ENCODE measurements at regions of chr12 and their contacts with region 1.

Region 1: GRCh38 chr12:8890313-8891085 is 23.8 kb upstream of the PHC1 start:
- DNase-seq: peak; percentile 30 to 77 (median 55)
- ATAC-seq: peak; percentile 90
- H3K4me3 ChIP-seq: peak overlapping the region; percentile 44 to 55
- H3K4me3 Mint-ChIP-seq: peak overlapping the region; percentile 88
- H3K27ac ChIP-seq: peak overlapping the region in 1 of 2 experiments; percentile 26
- H3K27ac Mint-ChIP-seq: peak overlapping the region; percentile 66
- H3K4me1 ChIP-seq: no peaks in the 10 kb centered on the region
- H3K4me1 Mint-ChIP-seq: peaks cover 4% of the 10 kb centered on the region
- H3K27me3 ChIP-seq: no peaks in the 10 kb centered on the region
- H3K27me3 Mint-ChIP-seq: peaks cover 2% of the 10 kb centered on the region
- CTCF ChIP-seq: peak; percentile 94

Region 2: GRCh38 chr12:8544295-8544694 is 346.2 kb before region 1 on chr12:
- CTCF ChIA-PET with region 1: interaction called, 31 read pairs
- POLR2A ChIA-PET with region 1: no interaction called
- intact Hi-C with region 1: loop called (anchors 1 to 2 kb)
- DNase-seq: peak; percentile 46 to 84 (median 75)
- ATAC-seq: peak; percentile 81
- H3K4me3 ChIP-seq: no peak overlapping the region
- H3K4me3 Mint-ChIP-seq: peak overlapping the region; percentile 13
- H3K27ac ChIP-seq: no peak overlapping the region
- H3K27ac Mint-ChIP-seq: no peak overlapping the region
- H3K4me1 ChIP-seq: no peaks in the 10 kb centered on the region
- H3K4me1 Mint-ChIP-seq: peaks cover 9% of the 10 kb centered on the region
- H3K27me3 ChIP-seq: no peaks in the 10 kb centered on the region
- H3K27me3 Mint-ChIP-seq: peaks cover 14% of the 10 kb centered on the region
- CTCF ChIP-seq: peak; percentile 95

Region 3: GRCh38 chr12:8681041-8681902 is 209.2 kb before region 1 on chr12:
- CTCF ChIA-PET with region 1: interaction called, 81 read pairs
- POLR2A ChIA-PET with region 1: no interaction called
- intact Hi-C with region 1: loop called (anchors 1 kb)
- DNase-seq: no peak
- ATAC-seq: no peak
- H3K4me3 ChIP-seq: no peak overlapping the region
- H3K4me3 Mint-ChIP-seq: no peak overlapping the region
- H3K27ac ChIP-seq: no peak overlapping the region
- H3K27ac Mint-ChIP-seq: no peak overlapping the region
- H3K4me1 ChIP-seq: no peaks in the 10 kb centered on the region
- H3K4me1 Mint-ChIP-seq: peaks cover 10% of the 10 kb centered on the region
- H3K27me3 ChIP-seq: no peaks in the 10 kb centered on the region
- H3K27me3 Mint-ChIP-seq: peaks cover 2% of the 10 kb centered on the region
- CTCF ChIP-seq: no peak

Region 4: DNA sequence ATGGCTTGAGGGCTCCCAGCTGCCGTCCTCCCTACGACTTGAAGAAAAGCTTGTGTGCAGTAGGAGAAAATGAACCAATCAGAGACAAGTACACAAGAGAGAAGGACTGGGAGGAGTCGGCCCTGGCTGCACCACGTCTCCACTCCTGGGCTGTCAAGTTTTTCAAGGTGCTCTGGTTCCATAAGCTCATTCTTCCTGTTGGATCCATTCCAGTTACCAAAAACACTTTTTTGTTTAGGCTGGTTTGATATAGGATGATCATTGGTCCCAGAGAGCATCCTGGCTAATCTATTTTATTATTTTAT is 70.9 kb before region 1 on chr12:
- CTCF ChIA-PET with region 1: no interaction called
- POLR2A ChIA-PET with region 1: no interaction called
- intact Hi-C with region 1: no loop called
- DNase-seq: no peak
- ATAC-seq: no peak
- H3K4me3 ChIP-seq: no peak overlapping the region
- H3K4me3 Mint-ChIP-seq: no peak overlapping the region
- H3K27ac ChIP-seq: no peak overlapping the region
- H3K27ac Mint-ChIP-seq: no peak overlapping the region
- H3K4me1 ChIP-seq: no peaks in the 10 kb centered on the region
- H3K4me1 Mint-ChIP-seq: no peaks in the 10 kb centered on the region
- H3K27me3 ChIP-seq: no peaks in the 10 kb centered on the region
- H3K27me3 Mint-ChIP-seq: no peaks in the 10 kb centered on the region
- CTCF ChIP-seq: no peak

Region 5: GRCh38 chr12:8852119-8852518 is 38.4 kb before region 1 on chr12:
- CTCF ChIA-PET with region 1: interaction called, 12 read pairs
- POLR2A ChIA-PET with region 1: no interaction called
- intact Hi-C with region 1: no loop called
- DNase-seq: no peak
- ATAC-seq: no peak
- H3K4me3 ChIP-seq: no peak overlapping the region
- H3K4me3 Mint-ChIP-seq: no peak overlapping the region
- H3K27ac ChIP-seq: no peak overlapping the region
- H3K27ac Mint-ChIP-seq: no peak overlapping the region
- H3K4me1 ChIP-seq: no peaks in the 10 kb centered on the region
- H3K4me1 Mint-ChIP-seq: no peaks in the 10 kb centered on the region
- H3K27me3 ChIP-seq: no peaks in the 10 kb centered on the region
- H3K27me3 Mint-ChIP-seq: peaks cover 2% of the 10 kb centered on the region
- CTCF ChIP-seq: no peak

Region 6: GRCh38 chr12:8876887-8877286 is 13.6 kb before region 1 on chr12:
- CTCF ChIA-PET with region 1: interaction called, 17 read pairs
- POLR2A ChIA-PET with region 1: no interaction called
- intact Hi-C with region 1: no loop called
- DNase-seq: no peak
- ATAC-seq: no peak
- H3K4me3 ChIP-seq: no peak overlapping the region
- H3K4me3 Mint-ChIP-seq: no peak overlapping the region
- H3K27ac ChIP-seq: no peak overlapping the region
- H3K27ac Mint-ChIP-seq: no peak overlapping the region
- H3K4me1 ChIP-seq: no peaks in the 10 kb centered on the region
- H3K4me1 Mint-ChIP-seq: no peaks in the 10 kb centered on the region
- H3K27me3 ChIP-seq: no peaks in the 10 kb centered on the region
- H3K27me3 Mint-ChIP-seq: peaks cover 2% of the 10 kb centered on the region
- CTCF ChIP-seq: no peak

Region 7: GRCh38 chr12:8914716-8915526 is 24.4 kb after region 1 on chr12:
- CTCF ChIA-PET with region 1: interaction called, 11 read pairs
- POLR2A ChIA-PET with region 1: interaction called, 3 read pairs
- intact Hi-C with region 1: loop called in 1 of 2 experiments (anchors 2 kb)
- DNase-seq: peak; percentile 26 to 81 (median 60)
- ATAC-seq: peak; percentile 81
- H3K4me3 ChIP-seq: peak overlapping the region; percentile 79 to 82
- H3K4me3 Mint-ChIP-seq: no peak overlapping the region
- H3K27ac ChIP-seq: peak overlapping the region; percentile 44 to 61
- H3K27ac Mint-ChIP-seq: no peak overlapping the region
- H3K4me1 ChIP-seq: peaks cover 23% of the 10 kb centered on the region
- H3K4me1 Mint-ChIP-seq: peaks cover 13% of the 10 kb centered on the region
- H3K27me3 ChIP-seq: no peaks in the 10 kb centered on the region
- H3K27me3 Mint-ChIP-seq: no peaks in the 10 kb centered on the region
- CTCF ChIP-seq: no peak

Region 8: GRCh38 chr12:9039397-9039977 is 149.0 kb after region 1 on chr12:
- CTCF ChIA-PET with region 1: interaction called, 15 read pairs
- POLR2A ChIA-PET with region 1: no interaction called
- intact Hi-C with region 1: loop called in 1 of 2 experiments (anchors 2 kb)
- DNase-seq: peak in 2 of 9 experiments; percentile 68 to 79
- ATAC-seq: peak; percentile 93
- H3K4me3 ChIP-seq: no peak overlapping the region
- H3K4me3 Mint-ChIP-seq: no peak overlapping the region
- H3K27ac ChIP-seq: peak overlapping the region in 1 of 2 experiments; percentile 51
- H3K27ac Mint-ChIP-seq: peak overlapping the region; percentile 21
- H3K4me1 ChIP-seq: peaks cover 36% of the 10 kb centered on the region
- H3K4me1 Mint-ChIP-seq: peaks cover 51% of the 10 kb centered on the region
- H3K27me3 ChIP-seq: no peaks in the 10 kb centered on the region
- H3K27me3 Mint-ChIP-seq: no peaks in the 10 kb centered on the region
- CTCF ChIP-seq: peak; percentile 96